ENCODE measurements at regions of chr14 and their contacts with region 1.

Region 1: GRCh38 chr14:75188520-75189268 is 12.3 kb upstream of the TMED10 start:
- DNase-seq: peak in 1 of 2 donors; percentile 37
- ATAC-seq: peak in 7 of 8 donors; percentile 57 to 80 (median 68)
- H3K4me3 ChIP-seq: no peak overlapping the region
- H3K27ac ChIP-seq: peak overlapping the region in 3 of 10 donors; percentile 18 to 80 (median 41)
- H3K4me1 ChIP-seq: peaks cover 0 to 35% (median 0%) of the 10 kb centered on the region in 9 donors
- H3K27me3 ChIP-seq: no peaks in the 10 kb centered on the region
- CTCF ChIP-seq: no peak

Region 2: GRCh38 chr14:75113932-75114539 is 74.7 kb before region 1 on chr14:
- intact Hi-C with region 1: no loop called
- DNase-seq: no peak
- ATAC-seq: no peak
- H3K4me3 ChIP-seq: no peak overlapping the region
- H3K27ac ChIP-seq: no peak overlapping the region
- H3K4me1 ChIP-seq: no peaks in the 10 kb centered on the region
- H3K27me3 ChIP-seq: no peaks in the 10 kb centered on the region
- CTCF ChIP-seq: no peak

Region 3: GRCh38 chr14:75230140-75231045 is 41.7 kb after region 1 on chr14:
- intact Hi-C with region 1: loop called in 3 of 10 experiments (anchors 10 kb)
- DNase-seq: peak in 1 of 2 donors; percentile 83
- ATAC-seq: peak in 5 of 8 donors; percentile 46 to 80 (median 60)
- H3K4me3 ChIP-seq: no peak overlapping the region
- H3K27ac ChIP-seq: peak overlapping the region in 6 of 10 donors; percentile 21 to 60 (median 43)
- H3K4me1 ChIP-seq: peaks cover 0 to 53% (median 9%) of the 10 kb centered on the region in 9 donors
- H3K27me3 ChIP-seq: no peaks in the 10 kb centered on the region
- CTCF ChIP-seq: peak in 4 of 9 donors; percentile 14 to 22 (median 20)

Region 4: GRCh38 chr14:75249251-75249957 is 60.7 kb after region 1 on chr14:
- intact Hi-C with region 1: loop called in 1 of 10 experiments (anchors 10 kb)
- DNase-seq: no peak
- ATAC-seq: peak in 3 of 8 donors; percentile 6 to 25 (median 16)
- H3K4me3 ChIP-seq: no peak overlapping the region
- H3K27ac ChIP-seq: peak overlapping the region in 1 of 10 donors; percentile 26
- H3K4me1 ChIP-seq: peaks cover 0 to 44% (median 5%) of the 10 kb centered on the region in 9 donors
- H3K27me3 ChIP-seq: no peaks in the 10 kb centered on the region
- CTCF ChIP-seq: no peak

Region 5: DNA sequence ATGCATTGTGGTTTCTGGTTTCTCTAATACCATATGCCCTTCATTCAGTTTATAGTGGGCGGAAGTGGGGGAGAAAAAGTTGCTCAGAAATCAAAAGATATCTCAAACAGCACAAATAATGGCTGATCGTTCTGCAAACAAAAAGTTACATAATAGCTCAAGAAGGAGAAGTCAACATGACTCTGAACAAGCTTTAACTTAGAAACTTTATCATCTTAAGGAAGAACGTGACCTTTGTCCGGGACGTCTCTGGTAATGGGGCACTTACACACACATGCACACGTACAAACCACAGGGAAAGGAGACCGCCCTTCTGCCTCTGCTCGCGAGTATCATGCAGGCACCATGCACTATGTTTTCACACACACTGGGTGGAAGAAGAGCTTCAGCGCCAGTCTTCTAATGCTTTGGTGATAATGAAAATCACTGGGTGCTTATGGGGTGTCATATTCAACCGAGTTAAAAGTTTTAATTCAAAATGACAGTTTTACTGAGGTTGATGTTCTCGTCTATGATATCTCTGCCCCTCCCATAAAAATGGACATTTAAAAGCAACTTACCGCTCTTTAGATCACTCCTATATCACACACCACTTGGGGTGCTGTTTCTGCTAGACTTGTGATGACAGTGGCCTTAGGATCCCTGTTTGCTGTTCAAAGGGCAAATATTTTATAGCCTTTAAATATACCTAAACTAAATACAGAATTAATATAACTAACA is 94.6 kb after region 1 on chr14:
- intact Hi-C with region 1: no loop called
- DNase-seq: no peak
- ATAC-seq: no peak
- H3K4me3 ChIP-seq: no peak overlapping the region
- H3K27ac ChIP-seq: peak overlapping the region in 2 of 10 donors; percentile 23 to 97
- H3K4me1 ChIP-seq: peaks cover 3 to 76% (median 38%) of the 10 kb centered on the region in 9 donors
- H3K27me3 ChIP-seq: no peaks in the 10 kb centered on the region
- CTCF ChIP-seq: peak in 3 of 9 donors; percentile 15 to 19 (median 15)

Region 6: GRCh38 chr14:76012354-76012753 is 823.7 kb after region 1 on chr14:
- intact Hi-C with region 1: no loop called
- DNase-seq: peak; percentile 21 to 49
- ATAC-seq: peak; percentile 84 to 94 (median 91)
- H3K4me3 ChIP-seq: no peak overlapping the region
- H3K27ac ChIP-seq: peak overlapping the region in 7 of 10 donors; percentile 48 to 76 (median 63)
- H3K4me1 ChIP-seq: peaks cover 0 to 25% (median 17%) of the 10 kb centered on the region in 9 donors
- H3K27me3 ChIP-seq: no peaks in the 10 kb centered on the region
- CTCF ChIP-seq: peak in 2 of 9 donors; percentile 24 to 31

Measured in heart right ventricle (tissue), 16 donors.